ENCODE measurements at regions of chr5 and their contacts with region 1.

Region 1: GRCh38 chr5:61394078-61394704 is 62.1 kb downstream of the ZSWIM6 start:
- DNase-seq: peak; percentile 49
- ATAC-seq: peak; percentile 44
- H3K4me3 ChIP-seq: no peak overlapping the region
- H3K27ac ChIP-seq: no peak overlapping the region
- H3K4me1 ChIP-seq: peaks cover 9% of the 10 kb centered on the region
- H3K27me3 ChIP-seq: no peaks in the 10 kb centered on the region
- CTCF ChIP-seq: no peak
- POLR2A ChIP-seq: no peak
- RAD21 ChIP-seq: no peak

Region 2: DNA sequence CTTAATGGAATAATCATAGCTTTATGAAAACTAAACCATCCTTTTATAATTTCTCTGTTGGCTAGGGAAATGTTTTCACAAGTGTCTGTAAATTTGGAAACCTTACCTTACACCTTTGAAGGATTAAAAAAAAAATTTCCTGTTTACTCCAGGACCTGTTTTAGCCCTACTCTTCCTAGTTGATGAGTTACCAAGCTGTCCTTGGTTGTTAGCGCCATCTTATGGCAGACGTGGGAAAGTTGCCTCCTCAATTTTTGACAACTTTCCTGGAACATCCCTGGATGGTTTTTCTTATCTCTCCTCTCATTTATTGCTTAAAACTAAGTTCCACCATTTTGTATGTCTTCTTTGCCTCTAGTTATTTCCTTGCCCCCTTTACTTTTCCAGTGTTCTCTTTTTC is 36.4 kb before region 1 on chr5:
- CTCF ChIA-PET with region 1: interaction called, 3 read pairs
- POLR2A ChIA-PET with region 1: interaction called, 11 read pairs
- dilution Hi-C with region 1: no loop called
- in situ Hi-C with region 1: no loop called
- intact Hi-C with region 1: no loop called
- DNase-seq: no peak
- ATAC-seq: no peak
- H3K4me3 ChIP-seq: no peak overlapping the region
- H3K27ac ChIP-seq: no peak overlapping the region
- H3K4me1 ChIP-seq: peaks cover 7% of the 10 kb centered on the region
- H3K27me3 ChIP-seq: no peaks in the 10 kb centered on the region
- CTCF ChIP-seq: peak; percentile 33
- POLR2A ChIP-seq: no peak
- RAD21 ChIP-seq: peak; percentile 43